Transverse colon (tissue), 4 donors: ENCODE measurements at regions of chr20 and their contacts with region 1.

Region 1: DNA sequence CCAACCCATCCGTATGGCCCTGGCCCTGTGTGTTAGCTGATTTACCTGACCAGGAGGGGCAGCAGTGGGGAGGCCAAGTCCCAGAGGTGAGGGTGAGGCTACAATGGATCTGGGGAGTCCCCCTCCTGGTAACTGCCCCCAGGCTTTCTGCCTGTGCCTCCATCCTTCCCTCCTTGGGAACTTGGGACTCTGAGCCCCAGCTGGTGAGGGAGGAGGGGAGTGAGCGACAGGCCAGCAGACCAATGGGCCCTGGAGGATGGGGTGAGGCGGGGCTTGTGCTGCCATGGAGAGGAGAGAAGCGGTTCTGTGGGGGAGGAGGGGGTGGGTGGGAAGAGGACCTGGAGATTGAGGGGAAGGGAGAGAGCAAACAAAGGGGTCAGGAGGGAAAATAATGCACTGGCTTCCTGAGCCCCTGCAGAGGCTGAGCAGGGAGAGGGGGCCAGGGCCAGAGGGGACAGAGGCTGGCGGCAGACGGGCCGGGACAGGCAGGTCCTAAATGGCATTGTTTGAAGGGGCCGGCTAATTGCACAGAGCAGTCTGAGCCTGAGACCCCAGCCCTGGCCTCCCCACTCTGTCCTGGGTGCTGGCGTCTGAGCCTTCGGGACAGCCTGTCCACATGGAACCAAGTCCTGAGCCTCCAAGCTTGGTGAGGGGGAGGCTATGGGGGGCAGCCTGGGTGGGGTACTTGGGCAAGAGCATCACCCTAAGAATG is 17.5 kb downstream of the DNMT3B start:
- DNase-seq: no peak
- H3K4me3 ChIP-seq: no peak overlapping the region
- H3K27ac ChIP-seq: no peak overlapping the region
- H3K4me1 ChIP-seq: peaks cover 0 to 7% (median 0%) of the 10 kb centered on the region in 4 donors
- H3K27me3 ChIP-seq: no peaks in the 10 kb centered on the region
- CTCF ChIP-seq: no peak
- EP300 ChIP-seq: no peak
- POLR2A ChIP-seq: no peak

Region 2: DNA sequence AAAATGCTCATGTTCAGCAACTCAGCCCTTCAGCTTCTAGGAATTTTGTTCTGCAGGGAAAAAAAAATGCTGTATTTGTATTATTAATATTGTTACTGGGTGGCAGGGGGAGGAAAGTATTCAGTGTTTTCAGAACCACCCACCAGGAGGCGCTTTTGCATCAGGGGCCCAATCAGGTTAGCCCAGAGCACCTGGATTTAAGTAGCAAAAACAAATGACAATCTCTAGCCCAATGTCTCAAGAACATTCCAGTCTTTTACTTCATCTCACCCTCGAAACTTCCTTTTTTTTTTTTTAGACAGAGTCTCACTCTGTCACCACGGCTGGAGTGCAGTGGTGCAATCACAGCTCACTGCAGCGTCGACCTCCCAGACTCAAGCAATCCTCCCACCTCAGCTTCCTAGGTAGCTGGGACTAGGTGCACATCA is 105.3 kb before region 1 on chr20:
- in situ Hi-C with region 1: loop called in 2 of 4 experiments (anchors 5 kb)
- intact Hi-C with region 1: no loop called
- DNase-seq: peak; percentile 60
- H3K4me3 ChIP-seq: no peak overlapping the region
- H3K27ac ChIP-seq: no peak overlapping the region
- H3K4me1 ChIP-seq: peaks cover 0 to 4% (median 0%) of the 10 kb centered on the region in 4 donors
- H3K27me3 ChIP-seq: no peaks in the 10 kb centered on the region
- CTCF ChIP-seq: peak; percentile 47 to 73 (median 65)
- EP300 ChIP-seq: no peak
- POLR2A ChIP-seq: no peak

Region 3: GRCh38 chr20:32681175-32682084 is 98.2 kb before region 1 on chr20:
- in situ Hi-C with region 1: loop called in 2 of 4 experiments (anchors 5 kb)
- intact Hi-C with region 1: no loop called
- DNase-seq: no peak
- H3K4me3 ChIP-seq: no peak overlapping the region
- H3K27ac ChIP-seq: no peak overlapping the region
- H3K4me1 ChIP-seq: peaks cover 0 to 8% (median 0%) of the 10 kb centered on the region in 4 donors
- H3K27me3 ChIP-seq: no peaks in the 10 kb centered on the region
- CTCF ChIP-seq: no peak
- EP300 ChIP-seq: no peak
- POLR2A ChIP-seq: no peak